Natural killer cell (primary cell): ENCODE measurements at regions of chr19 and their contacts with region 1.

Region 1: GRCh38 chr19:55339048-55339888 is at the start of gene KMT5C:
- DNase-seq: peak; percentile 100
- ATAC-seq: peak; percentile 67 to 88 (median 76)
- H3K4me3 ChIP-seq: peak within 1 kb of the TSS; percentile 57
- H3K4me3 Mint-ChIP-seq: peak within 1 kb of the TSS; percentile 94
- H3K27ac ChIP-seq: peak within 1 kb of the TSS; percentile 97
- H3K27ac Mint-ChIP-seq: peak within 1 kb of the TSS; percentile 96 to 99
- H3K4me1 ChIP-seq: peaks cover 31% of the 10 kb centered on the region
- H3K4me1 Mint-ChIP-seq: peaks cover 18 to 33% of the 10 kb centered on the region in 2 donors
- H3K27me3 ChIP-seq: no peaks in the 10 kb centered on the region
- H3K27me3 Mint-ChIP-seq: peaks cover 0 to 9% of the 10 kb centered on the region in 2 donors
- CTCF ChIP-seq: no peak
- total RNA-seq, gene KMT5C: 44.5 to 147 (median 46.8) TPM

Region 2: DNA sequence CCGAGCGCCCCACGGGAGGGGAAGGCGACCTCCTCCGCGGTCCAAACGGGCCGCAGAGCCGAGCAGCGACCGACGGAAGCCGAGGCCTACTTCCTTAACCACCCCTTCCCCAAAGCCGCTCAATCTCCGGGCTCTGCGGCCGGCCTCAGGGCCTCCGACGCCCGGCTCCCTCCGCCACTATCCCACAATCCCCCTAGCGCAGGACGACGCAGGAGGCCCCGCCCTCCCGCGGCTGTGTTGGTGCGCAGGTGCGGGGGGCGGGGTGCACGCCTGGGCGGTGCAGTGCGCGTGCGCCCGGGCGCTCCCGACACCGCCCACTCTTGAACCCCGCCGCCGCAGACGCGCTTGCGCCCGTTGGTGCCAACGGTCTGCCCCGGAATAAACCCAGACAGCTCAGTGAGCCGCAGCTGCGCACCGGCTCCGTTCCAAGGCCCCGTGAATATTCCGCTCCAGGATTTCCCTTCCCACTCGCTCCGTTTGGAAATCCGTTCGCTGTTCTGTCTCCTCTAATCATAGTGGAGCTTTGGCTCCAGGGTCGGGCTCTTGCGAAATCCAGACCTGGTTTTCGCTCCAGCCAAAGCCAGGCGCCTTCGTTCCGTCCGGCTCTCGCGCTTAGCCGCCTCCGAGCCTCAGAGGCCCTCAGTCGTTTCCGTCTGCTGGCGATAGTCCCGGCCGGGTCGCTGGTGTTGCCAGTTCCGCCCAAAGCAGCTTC is 80.3 kb before region 1 on chr19 and contains the start of gene PPP6R1:
- intact Hi-C with region 1: loop called (anchors 2 kb)
- DNase-seq: peak; percentile 92 to 98
- ATAC-seq: peak; percentile 77 to 93 (median 84)
- H3K4me3 ChIP-seq: peak within 1 kb of the TSS; percentile 91
- H3K4me3 Mint-ChIP-seq: peak within 1 kb of the TSS; percentile 98
- H3K27ac ChIP-seq: peak within 1 kb of the TSS; percentile 95
- H3K27ac Mint-ChIP-seq: peak within 1 kb of the TSS; percentile 93 to 99
- H3K4me1 ChIP-seq: peaks cover 54% of the 10 kb centered on the region
- H3K4me1 Mint-ChIP-seq: peaks cover 51 to 53% of the 10 kb centered on the region in 2 donors
- H3K27me3 ChIP-seq: no peaks in the 10 kb centered on the region
- H3K27me3 Mint-ChIP-seq: no peaks in the 10 kb centered on the region
- CTCF ChIP-seq: no peak
- total RNA-seq, gene PPP6R1: 252 to 275 (median 260) TPM

Region 3: GRCh38 chr19:55301459-55302317 is 37.6 kb before region 1 on chr19:
- intact Hi-C with region 1: loop called (anchors 2 kb)
- DNase-seq: peak; percentile 96
- ATAC-seq: peak; percentile 93 to 95 (median 94)
- H3K4me3 ChIP-seq: peak overlapping the region; percentile 35
- H3K4me3 Mint-ChIP-seq: peak overlapping the region; percentile 84
- H3K27ac ChIP-seq: peak overlapping the region; percentile 46
- H3K27ac Mint-ChIP-seq: peak overlapping the region; percentile 75 to 92
- H3K4me1 ChIP-seq: peaks cover 15% of the 10 kb centered on the region
- H3K4me1 Mint-ChIP-seq: peaks cover 0 to 13% of the 10 kb centered on the region in 2 donors
- H3K27me3 ChIP-seq: no peaks in the 10 kb centered on the region
- H3K27me3 Mint-ChIP-seq: no peaks in the 10 kb centered on the region
- CTCF ChIP-seq: peak; percentile 90

Region 4: GRCh38 chr19:55358943-55359633 is 19.8 kb after region 1 on chr19:
- intact Hi-C with region 1: no loop called
- DNase-seq: no peak
- ATAC-seq: no peak
- H3K4me3 ChIP-seq: no peak overlapping the region
- H3K4me3 Mint-ChIP-seq: no peak overlapping the region
- H3K27ac ChIP-seq: no peak overlapping the region
- H3K27ac Mint-ChIP-seq: no peak overlapping the region
- H3K4me1 ChIP-seq: peaks cover 8% of the 10 kb centered on the region
- H3K4me1 Mint-ChIP-seq: no peaks in the 10 kb centered on the region
- H3K27me3 ChIP-seq: peaks cover 2% of the 10 kb centered on the region
- H3K27me3 Mint-ChIP-seq: peaks cover 10 to 15% of the 10 kb centered on the region in 2 donors
- CTCF ChIP-seq: no peak

Region 5: GRCh38 chr19:55385740-55386529 is 46.7 kb after region 1 on chr19 and contains the start of gene RPL28:
- intact Hi-C with region 1: loop called (anchors 1 kb)
- DNase-seq: peak; percentile 98 to 99
- ATAC-seq: peak; percentile 79 to 93 (median 84)
- H3K4me3 ChIP-seq: peak within 1 kb of the TSS; percentile 72
- H3K4me3 Mint-ChIP-seq: peak within 1 kb of the TSS; percentile 97
- H3K27ac ChIP-seq: peak within 1 kb of the TSS; percentile 94
- H3K27ac Mint-ChIP-seq: peak within 1 kb of the TSS; percentile 94 to 100
- H3K4me1 ChIP-seq: peaks cover 63% of the 10 kb centered on the region
- H3K4me1 Mint-ChIP-seq: peaks cover 54 to 79% of the 10 kb centered on the region in 2 donors
- H3K27me3 ChIP-seq: no peaks in the 10 kb centered on the region
- H3K27me3 Mint-ChIP-seq: no peaks in the 10 kb centered on the region
- CTCF ChIP-seq: no peak
- total RNA-seq, gene RPL28: 1,373 to 1,704 (median 1,679) TPM

Region 6: GRCh38 chr19:55407800-55408532 is 68.7 kb after region 1 on chr19:
- intact Hi-C with region 1: loop called (anchors 2 kb)
- DNase-seq: peak; percentile 96 to 99
- ATAC-seq: peak; percentile 85 to 93 (median 88)
- H3K4me3 ChIP-seq: peak overlapping the region; percentile 57
- H3K4me3 Mint-ChIP-seq: peak overlapping the region; percentile 98
- H3K27ac ChIP-seq: peak overlapping the region; percentile 99
- H3K27ac Mint-ChIP-seq: peak overlapping the region; percentile 99 to 100
- H3K4me1 ChIP-seq: peaks cover 24% of the 10 kb centered on the region
- H3K4me1 Mint-ChIP-seq: peaks cover 29 to 33% of the 10 kb centered on the region in 2 donors
- H3K27me3 ChIP-seq: no peaks in the 10 kb centered on the region
- H3K27me3 Mint-ChIP-seq: no peaks in the 10 kb centered on the region
- CTCF ChIP-seq: no peak